ENCODE measurements at regions of chr2 and their contacts with region 1.

Region 1: GRCh38 chr2:55010149-55010591 is 40.1 kb downstream of the RTN4 start:
- DNase-seq: peak; percentile 36 to 90 (median 68)

Region 2: GRCh38 chr2:54723131-54723995 is 286.8 kb before region 1 on chr2 and contains the start of gene EML6:
- intact Hi-C with region 1: loop called (anchors 10 kb)
- DNase-seq: peak; percentile 94 to 100 (median 99)

Region 3: DNA sequence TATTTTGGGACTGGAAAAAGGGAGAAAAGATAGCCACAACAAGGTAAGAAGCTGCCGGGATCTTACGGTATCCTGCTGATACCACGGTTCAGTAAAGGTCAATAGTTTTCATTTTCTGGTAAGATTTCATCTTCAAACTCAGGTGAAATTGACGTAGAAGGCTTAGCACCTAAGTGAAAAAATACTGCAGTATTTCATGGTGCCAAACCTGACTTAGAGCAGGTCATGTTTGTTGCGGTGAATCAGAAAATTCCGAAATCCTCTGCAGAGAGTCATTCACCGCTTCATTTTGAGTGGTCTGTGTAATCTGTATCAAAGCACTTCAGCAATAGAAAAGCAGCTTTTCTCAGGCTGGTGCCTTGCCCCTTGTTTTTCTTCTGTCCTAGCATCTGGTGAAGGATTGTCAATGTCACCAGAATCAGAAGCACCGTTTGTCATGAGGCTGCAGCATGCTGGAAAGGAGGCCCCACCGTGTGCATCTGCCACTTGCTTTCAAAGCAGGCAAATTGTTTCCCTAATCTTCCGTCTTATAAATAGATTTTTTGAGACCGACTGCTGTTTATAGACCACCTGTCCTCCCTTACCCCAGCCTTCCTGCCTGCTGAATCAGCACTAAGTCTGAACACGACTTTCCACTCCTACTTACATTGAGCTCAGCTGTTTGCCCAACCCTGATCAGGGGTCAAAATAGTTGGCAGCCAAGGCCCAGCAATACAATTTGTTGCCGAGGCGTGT is 130.4 kb before region 1 on chr2:
- intact Hi-C with region 1: no loop called
- DNase-seq: no peak

Region 4: DNA sequence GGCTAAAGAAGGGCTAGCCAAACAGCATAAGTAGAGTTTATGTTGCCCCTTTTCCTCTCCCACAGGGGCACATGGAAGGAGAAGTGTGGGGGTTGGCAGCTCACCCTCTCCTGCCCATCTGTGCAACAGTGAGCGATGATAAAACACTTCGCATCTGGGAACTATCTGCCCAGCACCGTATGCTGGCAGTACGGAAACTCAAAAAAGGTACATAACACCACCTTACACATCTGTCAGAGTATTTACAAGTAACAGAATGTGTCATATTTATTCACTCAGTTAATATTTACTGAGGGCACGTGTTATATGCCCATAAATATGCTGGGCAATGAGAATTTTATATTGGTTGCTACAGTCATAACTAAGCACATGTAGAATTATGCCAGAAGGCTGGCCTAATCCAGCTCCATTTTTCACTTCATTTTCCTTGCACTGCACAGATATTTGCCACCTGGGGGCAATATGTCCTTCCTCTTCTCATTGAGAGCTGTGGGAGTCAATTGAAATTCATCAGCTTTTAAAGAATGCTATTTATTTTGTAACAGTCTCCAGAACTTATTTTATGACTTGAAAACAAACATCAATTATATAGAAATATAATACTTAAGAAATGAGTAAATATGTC is 110.5 kb before region 1 on chr2:
- intact Hi-C with region 1: loop called (anchors 10 kb)
- DNase-seq: peak in 26 of 42 donors; percentile 13 to 80 (median 54)

Region 5: DNA sequence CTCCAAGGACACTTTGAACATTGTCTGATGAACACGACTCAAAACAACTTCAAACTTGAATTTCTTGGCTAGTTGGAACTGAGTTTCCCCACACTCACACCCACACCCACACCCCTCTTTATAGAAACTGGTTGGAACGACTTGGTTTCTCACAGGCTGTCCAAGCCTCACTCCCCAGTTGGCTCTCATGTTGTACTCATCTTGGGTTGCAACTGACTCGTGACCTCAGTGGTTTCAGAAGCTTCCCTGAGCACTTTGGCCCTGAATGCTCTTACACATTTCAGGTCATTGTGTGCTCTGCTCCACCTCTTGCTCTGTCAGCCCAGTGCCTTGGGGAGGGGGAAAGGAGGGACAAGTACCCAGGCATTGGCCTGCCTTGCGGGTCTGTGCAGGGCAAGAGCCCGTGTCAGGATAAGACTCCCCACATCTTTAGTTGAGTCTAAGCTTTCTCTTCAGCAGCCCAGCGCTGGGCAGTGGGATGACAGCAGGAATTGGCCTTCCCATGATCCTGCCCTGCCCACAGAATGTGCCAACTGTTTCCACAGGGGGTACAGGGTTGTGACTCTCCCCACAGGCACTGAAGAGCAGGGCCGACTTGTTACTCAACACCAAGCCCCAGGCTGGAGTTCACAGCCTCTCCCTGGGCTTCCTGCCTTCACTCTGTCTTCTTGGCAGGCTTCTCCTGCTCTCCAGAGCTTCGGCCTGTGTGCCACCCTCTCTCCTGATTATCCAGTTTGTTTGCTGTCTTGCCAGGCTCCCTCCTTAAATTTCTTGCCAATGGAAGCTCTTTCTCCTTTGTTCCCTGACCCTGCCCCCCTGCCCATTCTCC is 64.6 kb before region 1 on chr2:
- intact Hi-C with region 1: loop called (anchors 10 kb)
- DNase-seq: peak in 28 of 42 donors; percentile 26 to 82 (median 56)

Region 6: GRCh38 chr2:55150834-55151233 is 140.7 kb after region 1 on chr2:
- intact Hi-C with region 1: no loop called
- DNase-seq: peak in 2 of 42 donors; percentile 35 to 41

Region 7: GRCh38 chr2:55168221-55169154 is 158.3 kb after region 1 on chr2:
- intact Hi-C with region 1: loop called (anchors 10 kb)
- DNase-seq: peak; percentile 51 to 92 (median 80)

Measured in head of caudate nucleus (tissue), 42 donors.